ENCODE measurements at regions of chr1 and their contacts with region 1.

Region 1: GRCh38 chr1:155084722-155085503 is 6.3 kb downstream of the EFNA3 start:
- DNase-seq: peak; percentile 93
- H3K4me3 ChIP-seq: peak overlapping the region; percentile 53 to 57
- H3K27ac ChIP-seq: peak overlapping the region; percentile 91 to 94
- H3K4me1 ChIP-seq: peaks cover 36% of the 10 kb centered on the region
- H3K27me3 ChIP-seq: no peaks in the 10 kb centered on the region
- CTCF ChIP-seq: peak; percentile 84 to 99 (median 97)
- POLR2A ChIP-seq: peak; percentile 56

Region 2: DNA sequence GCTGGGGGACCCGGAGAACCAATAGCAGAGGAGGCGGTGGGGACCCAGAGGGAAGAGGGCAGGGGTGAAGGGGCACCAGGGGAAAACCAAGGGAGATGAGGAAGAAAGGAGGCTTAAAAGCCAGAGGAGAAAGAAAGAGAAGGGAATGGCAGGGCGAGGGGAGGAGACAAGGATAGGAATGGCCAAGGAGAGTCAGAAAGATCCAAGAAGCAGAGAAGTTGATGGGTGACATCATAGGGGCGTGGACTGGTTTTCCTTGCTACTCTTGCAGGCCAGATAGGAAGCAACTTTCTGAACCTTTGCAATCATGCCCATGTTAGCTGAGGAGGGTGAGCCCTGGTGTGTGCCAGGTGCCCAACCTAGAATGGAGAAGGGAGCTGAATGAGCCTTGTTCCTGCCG is 1401.1 kb before region 1 on chr1:
- intact Hi-C with region 1: no loop called
- DNase-seq: no peak
- H3K4me3 ChIP-seq: no peak overlapping the region
- H3K27ac ChIP-seq: no peak overlapping the region
- H3K4me1 ChIP-seq: no peaks in the 10 kb centered on the region
- H3K27me3 ChIP-seq: no peaks in the 10 kb centered on the region
- CTCF ChIP-seq: no peak
- POLR2A ChIP-seq: no peak

Region 3: DNA sequence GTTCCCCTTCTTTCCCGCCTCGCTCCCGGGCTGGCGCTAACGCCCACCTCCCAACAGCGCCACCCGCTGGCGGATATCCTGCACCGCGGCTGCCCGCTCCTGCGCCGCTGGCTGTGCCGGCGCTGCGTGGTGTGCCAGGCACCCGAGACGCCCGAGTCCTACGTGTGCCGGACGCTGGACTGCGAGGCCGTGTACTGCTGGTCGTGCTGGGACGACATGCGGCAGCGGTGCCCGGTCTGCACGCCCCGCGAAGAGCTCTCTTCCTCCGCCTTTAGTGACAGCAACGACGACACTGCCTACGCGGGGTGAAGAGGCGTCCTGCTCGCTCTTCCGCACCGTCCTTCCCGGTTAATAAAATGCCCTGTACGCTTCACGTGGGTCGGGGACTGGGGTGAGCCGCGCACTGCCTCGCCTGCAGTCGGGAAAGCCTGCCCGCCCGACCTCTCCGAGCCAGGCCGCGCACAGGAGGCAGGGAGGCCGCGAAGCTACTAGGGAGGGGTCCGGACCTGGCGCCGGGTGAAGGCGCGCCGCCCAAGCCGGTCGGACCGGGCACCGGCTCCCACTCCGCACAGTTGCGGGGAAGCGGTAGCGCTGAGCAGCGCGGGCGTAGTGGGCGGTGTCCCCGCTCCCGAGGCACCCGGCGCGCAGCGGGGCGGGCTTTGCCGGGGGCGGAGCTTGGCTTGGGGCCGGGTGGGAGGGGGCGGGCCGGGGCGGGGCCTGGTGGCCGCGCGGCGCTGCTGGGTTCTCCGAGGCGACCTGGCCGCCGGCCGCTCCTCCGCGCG is 34.2 kb before region 1 on chr1 and contains the start of gene ADAM15:
- intact Hi-C with region 1: loop called (anchors 2 kb)
- DNase-seq: peak; percentile 77
- H3K4me3 ChIP-seq: peak within 1 kb of the TSS; percentile 71 to 74
- H3K27ac ChIP-seq: peak within 1 kb of the TSS; percentile 92 to 93
- H3K4me1 ChIP-seq: peaks cover 19% of the 10 kb centered on the region
- H3K27me3 ChIP-seq: no peaks in the 10 kb centered on the region
- CTCF ChIP-seq: peak; percentile 83 to 96 (median 90)
- POLR2A ChIP-seq: peak; percentile 17
- total RNA-seq, gene ADAM15: 72.5 to 138 TPM

Region 4: DNA sequence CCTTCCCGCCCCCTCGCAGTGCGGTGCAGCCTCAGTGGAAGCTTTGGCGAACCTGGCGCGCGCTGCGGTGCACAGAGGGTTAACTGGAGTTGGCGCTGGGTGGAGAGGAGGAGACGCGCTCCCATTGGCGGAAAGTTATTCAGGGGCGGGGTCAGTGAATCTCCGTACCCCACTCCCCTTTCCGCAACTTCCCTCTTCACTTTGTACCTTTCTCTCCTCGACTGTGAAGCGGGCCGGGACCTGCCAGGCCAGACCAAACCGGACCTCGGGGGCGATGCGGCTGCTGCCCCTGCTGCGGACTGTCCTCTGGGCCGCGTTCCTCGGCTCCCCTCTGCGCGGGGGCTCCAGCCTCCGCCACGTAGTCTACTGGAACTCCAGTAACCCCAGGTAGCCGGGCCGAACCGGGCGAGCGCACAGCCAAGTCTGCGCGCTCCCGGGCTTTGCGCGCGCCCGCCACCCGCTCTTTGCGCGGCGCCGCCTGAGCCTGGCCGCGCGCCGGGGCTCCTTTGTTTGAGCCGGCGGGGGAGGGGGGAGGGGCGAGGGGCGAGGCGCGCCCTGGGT is 21.3 kb before region 1 on chr1 and contains the start of gene EFNA4:
- intact Hi-C with region 1: loop called (anchors 1 kb)
- DNase-seq: peak; percentile 89
- H3K4me3 ChIP-seq: peak within 1 kb of the TSS; percentile 68 to 69
- H3K27ac ChIP-seq: peak within 1 kb of the TSS; percentile 89 to 91
- H3K4me1 ChIP-seq: peaks cover 10% of the 10 kb centered on the region
- H3K27me3 ChIP-seq: no peaks in the 10 kb centered on the region
- CTCF ChIP-seq: peak in 1 of 4 experiments; percentile 7
- POLR2A ChIP-seq: peak; percentile 79
- total RNA-seq, gene EFNA4: 10.3 to 23.4 TPM

Region 5: GRCh38 chr1:155107309-155108264 is 22.7 kb after region 1 on chr1:
- intact Hi-C with region 1: no loop called
- DNase-seq: no peak
- H3K4me3 ChIP-seq: no peak overlapping the region
- H3K27ac ChIP-seq: no peak overlapping the region
- H3K4me1 ChIP-seq: no peaks in the 10 kb centered on the region
- H3K27me3 ChIP-seq: no peaks in the 10 kb centered on the region
- CTCF ChIP-seq: no peak
- POLR2A ChIP-seq: no peak